Transverse colon (tissue), 4 donors: ENCODE measurements at regions of chr7 and their contacts with region 1.

Region 1: DNA sequence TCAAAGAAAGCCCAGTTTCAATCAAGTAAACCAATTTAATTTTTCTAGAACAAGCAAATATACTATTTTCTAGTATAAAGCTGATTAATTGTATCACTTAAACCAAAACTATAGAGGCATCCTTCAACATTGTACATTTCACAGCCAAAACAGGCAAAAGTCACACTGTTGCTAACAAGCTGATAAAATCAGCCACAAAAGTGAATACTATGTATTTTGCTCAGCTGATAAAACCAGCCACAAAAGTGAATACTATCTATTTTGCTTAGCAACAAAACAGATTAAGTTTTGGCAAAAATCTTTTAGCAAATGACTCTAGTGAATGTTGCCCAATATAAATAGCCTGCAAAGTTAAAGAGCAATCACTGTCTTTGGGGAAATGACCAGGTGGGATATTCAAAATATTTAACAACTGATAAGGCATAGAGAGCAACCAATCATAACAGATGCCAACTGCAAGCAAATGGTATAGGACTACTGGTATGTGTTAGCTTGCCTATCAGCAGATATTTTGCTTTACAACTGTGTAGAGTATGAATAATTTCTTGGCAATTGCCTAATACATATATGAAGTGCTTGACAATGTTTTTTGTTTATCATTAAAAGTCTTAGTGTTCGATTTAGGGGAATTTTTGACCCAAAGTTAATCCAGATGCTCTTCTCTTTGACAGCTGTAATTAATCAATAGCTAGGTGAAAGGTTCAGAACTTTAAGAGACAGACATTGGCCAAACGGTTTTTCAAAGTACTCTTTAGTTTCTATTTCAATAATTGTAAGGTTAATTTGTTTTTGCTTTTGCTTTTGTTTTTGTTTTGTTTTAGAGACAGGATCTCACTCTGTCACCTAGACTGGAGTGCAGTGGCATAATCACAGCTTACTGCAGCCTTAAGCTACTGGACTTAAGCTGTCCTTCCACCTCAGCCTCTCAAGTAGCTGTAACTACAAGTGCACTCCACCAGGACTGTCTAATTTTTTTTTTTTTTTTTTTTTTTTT is 44.4 kb upstream of the SP4 start:
- DNase-seq: no peak
- H3K4me3 ChIP-seq: no peak overlapping the region
- H3K27ac ChIP-seq: no peak overlapping the region
- H3K4me1 ChIP-seq: no peaks in the 10 kb centered on the region
- H3K27me3 ChIP-seq: no peaks in the 10 kb centered on the region
- CTCF ChIP-seq: no peak
- EP300 ChIP-seq: no peak
- POLR2A ChIP-seq: no peak

Region 2: GRCh38 chr7:21253740-21254687 is 129.5 kb before region 1 on chr7:
- in situ Hi-C with region 1: no loop called
- intact Hi-C with region 1: no loop called
- DNase-seq: peak; percentile 57
- H3K4me3 ChIP-seq: no peak overlapping the region
- H3K27ac ChIP-seq: no peak overlapping the region
- H3K4me1 ChIP-seq: peaks cover 0 to 5% (median 0%) of the 10 kb centered on the region in 4 donors
- H3K27me3 ChIP-seq: peaks cover 65% of the 10 kb centered on the region
- CTCF ChIP-seq: peak in 4 of 5 experiments; percentile 38 to 51 (median 46)
- EP300 ChIP-seq: no peak
- POLR2A ChIP-seq: no peak

Region 3: DNA sequence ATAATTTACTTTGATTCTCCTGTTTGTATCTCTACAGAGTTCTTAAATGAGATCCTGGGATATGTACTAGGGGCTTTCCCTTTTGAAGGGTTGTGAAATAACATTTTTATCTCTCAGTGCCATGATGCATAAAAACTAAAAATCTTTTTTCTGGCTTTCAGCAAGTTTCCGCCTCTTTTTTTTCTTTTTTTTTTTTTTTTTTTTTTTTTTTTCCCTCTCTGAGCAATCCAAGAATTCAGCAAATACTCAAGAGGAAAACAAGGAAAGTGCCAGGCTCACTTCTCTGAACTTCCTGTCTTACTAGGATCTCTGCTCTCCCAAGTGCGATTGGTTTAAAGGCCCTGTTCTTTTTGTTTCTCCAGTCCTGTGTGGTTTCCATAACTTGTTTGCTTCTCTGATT is 1550.5 kb after region 1 on chr7:
- in situ Hi-C with region 1: no loop called
- intact Hi-C with region 1: no loop called
- DNase-seq: no peak
- H3K4me3 ChIP-seq: no peak overlapping the region
- H3K27ac ChIP-seq: peak overlapping the region in 1 of 4 donors; percentile 8
- H3K4me1 ChIP-seq: no peaks in the 10 kb centered on the region
- H3K27me3 ChIP-seq: no peaks in the 10 kb centered on the region
- CTCF ChIP-seq: no peak
- EP300 ChIP-seq: no peak
- POLR2A ChIP-seq: no peak

Region 4: DNA sequence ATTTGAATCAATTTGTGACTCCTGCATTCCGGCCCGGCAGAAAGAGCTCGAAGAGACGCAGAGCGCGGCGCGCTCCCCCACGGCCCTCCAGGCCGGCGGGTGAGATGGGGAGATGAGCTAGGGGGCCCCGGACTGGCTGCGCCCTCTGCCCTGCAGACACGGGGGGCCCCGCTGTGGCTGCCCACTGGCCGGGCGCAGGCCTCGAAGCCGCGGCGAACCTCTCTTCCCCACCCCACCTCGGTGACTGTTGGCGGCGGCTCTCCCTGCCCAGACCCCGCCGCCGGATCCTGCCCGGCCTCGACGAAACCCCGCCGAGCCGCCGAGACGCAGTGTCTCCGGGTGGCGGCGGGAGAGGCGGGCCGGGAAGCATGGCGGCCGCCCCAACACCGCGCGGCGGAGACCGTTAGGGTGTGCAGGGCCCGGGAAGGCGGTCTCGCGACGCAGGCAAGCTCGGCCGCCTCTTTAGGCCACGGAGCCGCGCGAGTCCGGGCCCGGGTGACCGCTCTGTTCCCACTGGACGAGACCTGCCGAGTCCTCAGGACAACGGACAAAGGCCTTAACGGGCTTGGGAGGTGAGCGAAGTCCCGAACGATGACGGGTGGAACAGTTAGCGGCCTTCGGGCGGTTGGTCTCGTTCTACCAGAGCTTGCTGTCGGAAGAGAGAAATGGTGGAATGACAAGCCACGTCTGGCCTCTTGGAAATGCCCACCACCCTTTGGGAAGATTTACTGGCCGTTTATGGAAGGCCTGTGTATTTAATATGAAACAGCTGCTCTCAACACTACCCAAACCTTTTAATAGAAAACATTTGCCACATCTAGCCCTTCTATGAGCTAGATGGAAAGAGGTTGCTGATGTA is 1822.6 kb after region 1 on chr7:
- in situ Hi-C with region 1: no loop called
- intact Hi-C with region 1: loop called (anchors 10 kb)
- DNase-seq: no peak
- H3K4me3 ChIP-seq: peak overlapping the region in 1 of 4 donors; percentile 1
- H3K27ac ChIP-seq: no peak overlapping the region
- H3K4me1 ChIP-seq: peaks cover 0 to 7% (median 0%) of the 10 kb centered on the region in 4 donors
- H3K27me3 ChIP-seq: peaks cover 8% of the 10 kb centered on the region
- CTCF ChIP-seq: no peak
- EP300 ChIP-seq: no peak
- POLR2A ChIP-seq: no peak